ENCODE measurements at regions of chr2 and their contacts with region 1.

Region 1: DNA sequence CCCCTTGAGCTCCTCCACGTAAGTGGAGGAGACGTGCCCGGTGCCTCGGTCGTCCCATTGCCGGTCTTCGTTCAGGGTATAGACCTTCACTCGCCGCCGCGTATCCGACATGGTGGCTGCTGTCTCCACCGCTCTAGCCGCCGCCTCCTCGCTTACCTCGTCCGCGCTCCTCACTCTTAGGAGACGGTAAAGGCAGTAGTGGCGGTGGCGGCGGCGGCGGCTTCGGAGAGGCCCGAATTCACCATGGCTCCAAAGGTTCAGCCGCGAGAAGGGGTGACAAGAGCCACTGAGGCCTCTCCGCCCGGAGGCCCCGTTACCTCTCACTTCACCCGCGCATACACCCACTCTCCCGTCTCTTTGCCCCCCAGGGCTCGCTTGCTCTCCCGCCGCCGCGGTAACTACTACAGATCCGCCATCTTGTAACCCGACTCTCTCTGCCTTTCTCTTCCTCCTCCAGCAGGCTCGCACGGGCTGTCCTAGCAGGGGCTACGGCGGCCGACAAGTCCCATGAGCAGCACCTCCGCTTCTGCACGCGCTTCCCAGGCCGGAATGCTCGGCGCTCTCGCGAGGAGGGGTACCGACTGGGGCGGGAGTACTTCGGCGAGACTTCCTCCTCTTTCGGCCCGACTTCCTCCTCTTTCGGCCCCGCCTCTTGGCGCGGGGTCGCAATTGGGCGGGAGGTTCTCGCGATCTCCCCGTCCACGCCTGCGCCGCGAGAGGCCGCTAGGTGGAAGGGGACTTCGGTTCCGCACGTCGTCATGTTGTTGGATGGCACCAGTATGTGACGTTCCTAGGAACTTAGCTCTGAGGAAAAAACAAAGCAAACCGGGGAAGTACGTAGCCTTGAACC is at the start of gene PPP4R3B:
- DNase-seq: peak; percentile 99
- H3K4me3 Mint-ChIP-seq: no peak within 1 kb of the TSS
- H3K27ac Mint-ChIP-seq: no peak within 1 kb of the TSS
- H3K4me1 Mint-ChIP-seq: peaks cover 21% of the 10 kb centered on the region
- H3K27me3 Mint-ChIP-seq: no peaks in the 10 kb centered on the region
- total RNA-seq, gene PPP4R3B: 55.4 to 57.2 TPM

Region 2: DNA sequence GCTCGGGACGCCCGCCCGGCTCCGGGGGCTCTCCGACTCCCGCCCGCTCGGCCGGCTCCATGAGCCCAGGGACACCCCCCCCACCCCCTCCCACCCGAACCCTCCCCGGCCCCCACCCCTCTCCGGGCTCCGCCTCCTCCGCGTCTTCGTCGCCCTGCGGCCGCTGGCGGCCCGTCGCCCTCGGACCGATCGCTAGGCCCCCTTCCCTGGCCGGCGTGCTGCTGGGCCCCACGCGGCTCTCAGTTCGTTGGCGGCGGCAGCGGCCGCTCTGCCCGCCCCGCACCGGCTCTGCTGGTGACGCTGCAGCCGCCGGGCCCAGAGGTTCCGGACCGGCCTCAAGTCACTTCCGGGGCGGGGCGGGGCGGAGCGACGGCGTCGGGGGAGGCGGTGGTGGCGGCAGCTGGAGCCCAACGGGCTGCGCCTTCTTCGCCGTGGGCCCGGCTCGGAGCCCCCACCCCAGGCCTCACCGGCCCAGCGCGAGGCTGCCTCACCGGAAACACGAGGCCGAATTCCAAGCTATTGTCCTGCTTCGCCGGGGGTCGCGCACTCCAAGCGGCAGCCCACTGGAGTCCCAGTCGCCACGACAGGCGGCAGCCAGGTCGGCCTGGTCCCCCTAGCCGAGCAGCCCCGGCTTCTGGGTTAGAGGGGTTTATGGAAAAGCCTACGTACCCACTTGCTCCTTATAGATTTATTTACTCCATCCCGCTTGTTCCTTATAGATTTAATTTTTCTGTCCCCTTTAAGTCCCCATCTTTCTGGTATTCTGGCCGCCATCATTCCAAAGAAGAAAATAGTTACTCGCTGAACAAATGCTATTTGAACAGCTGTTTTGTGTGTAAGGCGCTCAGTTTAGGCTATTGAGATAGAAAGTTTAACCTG is 1646.4 kb before region 1 on chr2 and contains the start of gene PSME4:
- CTCF ChIA-PET with region 1: no interaction called
- intact Hi-C with region 1: loop called (anchors 2 kb)
- DNase-seq: peak; percentile 95
- H3K4me3 Mint-ChIP-seq: peak within 1 kb of the TSS; percentile 83
- H3K27ac Mint-ChIP-seq: peak within 1 kb of the TSS; percentile 86
- H3K4me1 Mint-ChIP-seq: peaks cover 38% of the 10 kb centered on the region
- H3K27me3 Mint-ChIP-seq: no peaks in the 10 kb centered on the region
- total RNA-seq, gene PSME4: 31.5 to 38.8 TPM

Region 3: GRCh38 chr2:54503192-54503591 is 1114.2 kb before region 1 on chr2:
- CTCF ChIA-PET with region 1: no interaction called
- intact Hi-C with region 1: no loop called
- DNase-seq: peak; percentile 64
- H3K4me3 Mint-ChIP-seq: no peak overlapping the region
- H3K27ac Mint-ChIP-seq: no peak overlapping the region
- H3K4me1 Mint-ChIP-seq: no peaks in the 10 kb centered on the region
- H3K27me3 Mint-ChIP-seq: no peaks in the 10 kb centered on the region

Region 4: DNA sequence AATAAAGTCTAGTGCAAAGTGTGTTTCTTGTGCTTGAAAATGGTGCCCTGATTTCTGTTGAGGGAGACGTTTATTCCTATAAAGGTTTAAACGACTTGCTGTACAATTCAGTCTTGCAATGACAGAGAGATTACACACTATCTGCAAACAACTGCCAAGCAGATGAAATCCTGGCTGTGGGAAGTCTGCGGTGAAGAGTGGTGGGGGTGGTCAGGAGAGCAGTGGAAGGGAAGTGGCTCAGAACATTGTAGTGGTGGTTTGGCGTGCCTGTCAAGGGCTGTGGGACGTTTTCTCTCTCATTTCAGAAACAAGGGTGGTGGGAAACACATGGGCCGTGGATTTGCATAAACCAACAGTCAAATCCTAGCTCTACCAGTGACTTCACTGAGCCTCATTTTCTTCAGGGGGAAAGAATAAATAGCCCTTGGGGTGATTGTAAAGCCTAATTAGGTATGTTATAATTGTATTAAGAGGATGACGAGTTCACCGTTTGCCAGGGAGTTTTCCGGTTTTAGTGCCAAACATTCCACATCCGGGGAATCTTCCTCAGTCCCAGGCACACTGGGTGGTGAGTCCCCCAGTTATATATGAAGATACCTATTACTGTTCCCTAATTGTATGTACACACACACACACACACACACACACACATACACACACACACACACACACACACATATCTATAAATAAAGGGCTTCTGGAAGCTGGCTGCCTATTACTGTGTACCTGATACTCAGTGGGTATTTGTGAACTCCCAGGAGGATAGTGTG is 1046.3 kb before region 1 on chr2:
- CTCF ChIA-PET with region 1: no interaction called
- intact Hi-C with region 1: loop called (anchors 2 kb)
- DNase-seq: peak; percentile 93
- H3K4me3 Mint-ChIP-seq: peak overlapping the region; percentile 48
- H3K27ac Mint-ChIP-seq: peak overlapping the region; percentile 91
- H3K4me1 Mint-ChIP-seq: peaks cover 87% of the 10 kb centered on the region
- H3K27me3 Mint-ChIP-seq: no peaks in the 10 kb centered on the region

Region 5: GRCh38 chr2:55223958-55224760 is 393.2 kb before region 1 on chr2:
- CTCF ChIA-PET with region 1: no interaction called
- intact Hi-C with region 1: loop called (anchors 2 kb)
- DNase-seq: no peak
- H3K4me3 Mint-ChIP-seq: peak overlapping the region; percentile 71
- H3K27ac Mint-ChIP-seq: peak overlapping the region; percentile 68
- H3K4me1 Mint-ChIP-seq: peaks cover 36% of the 10 kb centered on the region
- H3K27me3 Mint-ChIP-seq: no peaks in the 10 kb centered on the region

Region 6: GRCh38 chr2:55282110-55282917 is 335.1 kb before region 1 on chr2:
- CTCF ChIA-PET with region 1: no interaction called
- intact Hi-C with region 1: loop called (anchors 2 kb)
- DNase-seq: peak; percentile 85
- H3K4me3 Mint-ChIP-seq: peak overlapping the region; percentile 84
- H3K27ac Mint-ChIP-seq: peak overlapping the region; percentile 85
- H3K4me1 Mint-ChIP-seq: peaks cover 22% of the 10 kb centered on the region
- H3K27me3 Mint-ChIP-seq: no peaks in the 10 kb centered on the region

Region 7: GRCh38 chr2:55519938-55520885 is 97.2 kb before region 1 on chr2:
- CTCF ChIA-PET with region 1: interaction called, 3 read pairs
- intact Hi-C with region 1: loop called (anchors 1 kb)
- DNase-seq: peak; percentile 45
- H3K4me3 Mint-ChIP-seq: peak overlapping the region; percentile 99
- H3K27ac Mint-ChIP-seq: peak overlapping the region; percentile 96
- H3K4me1 Mint-ChIP-seq: peaks cover 14% of the 10 kb centered on the region
- H3K27me3 Mint-ChIP-seq: no peaks in the 10 kb centered on the region

Region 8: GRCh38 chr2:55590810-55591440 is 26.5 kb before region 1 on chr2:
- CTCF ChIA-PET with region 1: no interaction called
- intact Hi-C with region 1: loop called (anchors 1 kb)
- DNase-seq: no peak
- H3K4me3 Mint-ChIP-seq: no peak overlapping the region
- H3K27ac Mint-ChIP-seq: no peak overlapping the region
- H3K4me1 Mint-ChIP-seq: peaks cover 40% of the 10 kb centered on the region
- H3K27me3 Mint-ChIP-seq: no peaks in the 10 kb centered on the region

Region 9: DNA sequence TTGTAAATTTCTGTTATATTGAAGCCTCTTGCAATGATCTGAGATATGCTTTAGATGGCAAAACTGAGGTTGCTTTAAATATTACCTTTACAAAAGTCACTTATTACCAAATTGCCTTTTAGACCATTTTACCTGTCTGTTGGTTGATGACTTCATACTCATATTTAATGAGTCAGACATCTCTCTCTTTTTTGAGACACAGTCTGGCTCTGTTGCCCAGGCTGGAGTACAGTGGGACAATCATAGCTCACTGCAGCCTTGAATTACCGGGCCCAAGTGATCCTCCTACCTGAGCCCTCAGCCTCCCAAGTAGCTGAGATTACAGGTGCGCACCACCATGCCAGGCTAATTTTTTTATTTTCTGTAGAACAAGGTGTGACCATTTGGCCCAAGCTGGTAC is 11.5 kb after region 1 on chr2:
- CTCF ChIA-PET with region 1: no interaction called
- intact Hi-C with region 1: no loop called
- DNase-seq: no peak
- H3K4me3 Mint-ChIP-seq: no peak overlapping the region
- H3K27ac Mint-ChIP-seq: no peak overlapping the region
- H3K4me1 Mint-ChIP-seq: peaks cover 24% of the 10 kb centered on the region
- H3K27me3 Mint-ChIP-seq: no peaks in the 10 kb centered on the region